ENCODE measurements at regions of chr17 and their contacts with region 1.

Region 1: DNA sequence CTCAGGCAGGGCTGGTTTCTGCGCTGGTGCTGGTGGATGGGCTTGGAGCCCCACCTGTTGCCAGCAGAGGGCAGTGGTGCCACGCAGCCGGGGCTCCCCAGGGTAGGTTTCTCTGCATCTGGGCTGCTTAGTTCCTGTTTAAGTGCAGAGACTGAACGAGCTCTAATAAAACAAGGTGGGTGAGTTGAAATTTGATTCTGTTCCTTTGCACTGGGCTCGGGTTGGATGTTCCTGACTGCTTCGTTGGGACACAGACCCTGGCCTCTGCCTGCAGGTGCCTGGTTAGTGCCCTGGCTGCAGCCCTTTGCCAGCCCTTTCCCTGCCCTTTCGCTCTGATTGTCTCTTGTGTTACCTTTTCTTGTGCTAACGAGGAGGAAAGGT is 30.0 kb downstream of the TBCD start:
- DNase-seq: peak; percentile 79 to 92 (median 85)
- ATAC-seq: peak; percentile 90 to 95 (median 95)
- H3K4me3 ChIP-seq: peak overlapping the region in 7 of 12 donors; percentile 14 to 33 (median 22)
- H3K27ac ChIP-seq: peak overlapping the region in 11 of 12 donors; percentile 21 to 85 (median 60)
- H3K4me1 ChIP-seq: peaks cover 0 to 10% (median 5%) of the 10 kb centered on the region in 12 donors
- H3K27me3 ChIP-seq: no peaks in the 10 kb centered on the region
- CTCF ChIP-seq: peak; percentile 95 to 99 (median 97)
- POLR2A ChIP-seq: no peak

Region 2: DNA sequence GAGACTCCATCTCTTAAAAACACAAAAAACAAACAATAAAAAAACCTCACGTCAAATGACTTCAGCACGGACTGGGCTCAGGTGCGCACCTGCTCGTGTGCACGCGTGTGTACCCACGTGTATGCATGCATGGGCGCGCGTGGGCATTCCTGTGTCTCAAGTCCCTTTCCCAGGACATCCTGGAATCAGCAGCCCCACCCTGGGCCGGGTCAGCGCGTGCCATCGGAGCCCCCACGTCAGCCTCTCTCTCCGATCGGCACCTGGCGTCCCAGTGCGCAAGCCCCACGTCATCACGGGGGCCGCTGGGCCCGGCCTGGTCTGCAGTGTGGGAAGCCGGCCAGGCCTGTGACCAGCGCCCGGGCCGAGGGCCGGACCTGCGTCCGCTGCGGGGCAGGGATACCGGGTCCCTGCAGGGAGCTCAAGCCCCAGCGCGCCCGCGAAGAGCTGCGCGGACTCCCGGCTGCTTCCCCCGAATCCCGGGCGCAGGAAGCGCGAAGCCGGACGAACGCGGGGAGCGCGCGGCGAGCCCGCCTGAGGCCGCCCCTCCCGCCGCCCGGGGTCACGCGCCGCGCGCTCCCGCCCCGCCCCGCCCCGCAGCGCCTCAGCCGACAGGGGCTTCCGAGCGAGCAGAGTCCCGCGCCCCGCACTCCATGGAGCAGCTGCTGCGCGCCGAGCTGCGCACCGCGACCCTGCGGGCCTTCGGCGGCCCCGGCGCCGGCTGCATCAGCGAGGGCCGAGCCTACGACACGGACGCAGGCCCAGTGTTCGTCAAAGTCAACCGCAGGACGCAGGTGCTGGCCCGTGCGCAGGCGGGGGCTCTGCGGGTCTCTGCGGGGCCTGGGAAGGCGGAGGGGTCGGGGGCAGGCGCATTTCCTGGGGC is 46.7 kb before region 1 on chr17 and contains the start of gene FN3K:
- intact Hi-C with region 1: no loop called
- DNase-seq: peak; percentile 75 to 81 (median 80)
- ATAC-seq: peak in 3 of 4 donors; percentile 46 to 64 (median 58)
- H3K4me3 ChIP-seq: peak within 1 kb of the TSS; percentile 43 to 95 (median 81)
- H3K27ac ChIP-seq: peak within 1 kb of the TSS; percentile 80 to 98 (median 94)
- H3K4me1 ChIP-seq: peaks cover 0 to 31% (median 9%) of the 10 kb centered on the region in 12 donors
- H3K27me3 ChIP-seq: no peaks in the 10 kb centered on the region
- CTCF ChIP-seq: no peak
- POLR2A ChIP-seq: peak in 1 of 2 donors; percentile 55
- total RNA-seq, gene FN3K: 15.5 to 121 (median 69.4) TPM

Region 3: DNA sequence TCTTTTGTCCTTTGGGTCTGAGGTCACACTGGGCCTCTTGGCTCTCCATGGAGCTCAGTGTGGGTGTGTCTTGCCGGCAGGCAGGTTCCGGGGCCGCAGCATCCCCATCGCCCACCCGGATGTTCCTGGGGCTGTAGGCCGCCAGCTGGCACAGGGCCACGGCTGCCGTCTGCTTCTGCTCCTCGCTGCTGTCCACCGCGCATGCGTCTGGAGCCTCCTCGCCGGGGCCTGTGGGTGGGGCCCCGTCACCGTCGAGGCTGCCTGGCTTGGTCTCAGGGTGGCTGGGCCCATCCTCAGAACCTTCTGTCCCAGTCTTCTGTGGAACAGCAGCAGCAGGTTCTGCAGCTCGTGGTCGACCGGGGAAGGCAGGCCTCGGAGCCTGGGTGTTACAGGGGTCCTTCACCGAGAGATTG is 48.4 kb after region 1 on chr17:
- intact Hi-C with region 1: loop called in 1 of 10 experiments (anchors 5 kb)
- DNase-seq: peak; percentile 86 to 94 (median 93)
- ATAC-seq: peak; percentile 79 to 91 (median 86)
- H3K4me3 ChIP-seq: peak overlapping the region in 11 of 12 donors; percentile 20 to 62 (median 41)
- H3K27ac ChIP-seq: peak overlapping the region; percentile 47 to 85 (median 72)
- H3K4me1 ChIP-seq: peaks cover 0 to 22% (median 6%) of the 10 kb centered on the region in 12 donors
- H3K27me3 ChIP-seq: no peaks in the 10 kb centered on the region
- CTCF ChIP-seq: no peak
- POLR2A ChIP-seq: peak in 1 of 2 donors; percentile 30

Region 4: GRCh38 chr17:82839617-82840280 is 57.9 kb after region 1 on chr17 and contains the start of gene ZNF750:
- intact Hi-C with region 1: loop called in 3 of 10 experiments (anchors 2 to 5 kb)
- DNase-seq: no peak
- ATAC-seq: no peak
- H3K4me3 ChIP-seq: no peak within 1 kb of the TSS
- H3K27ac ChIP-seq: peak within 1 kb of the TSS in 6 of 12 donors; percentile 25 to 76 (median 67)
- H3K4me1 ChIP-seq: peaks cover 4 to 42% (median 18%) of the 10 kb centered on the region in 12 donors
- H3K27me3 ChIP-seq: no peaks in the 10 kb centered on the region
- CTCF ChIP-seq: no peak
- POLR2A ChIP-seq: no peak
- total RNA-seq, gene ZNF750: 0.31 to 0.38 TPM in 2 of 9 donors, not detected in the others

Region 5: DNA sequence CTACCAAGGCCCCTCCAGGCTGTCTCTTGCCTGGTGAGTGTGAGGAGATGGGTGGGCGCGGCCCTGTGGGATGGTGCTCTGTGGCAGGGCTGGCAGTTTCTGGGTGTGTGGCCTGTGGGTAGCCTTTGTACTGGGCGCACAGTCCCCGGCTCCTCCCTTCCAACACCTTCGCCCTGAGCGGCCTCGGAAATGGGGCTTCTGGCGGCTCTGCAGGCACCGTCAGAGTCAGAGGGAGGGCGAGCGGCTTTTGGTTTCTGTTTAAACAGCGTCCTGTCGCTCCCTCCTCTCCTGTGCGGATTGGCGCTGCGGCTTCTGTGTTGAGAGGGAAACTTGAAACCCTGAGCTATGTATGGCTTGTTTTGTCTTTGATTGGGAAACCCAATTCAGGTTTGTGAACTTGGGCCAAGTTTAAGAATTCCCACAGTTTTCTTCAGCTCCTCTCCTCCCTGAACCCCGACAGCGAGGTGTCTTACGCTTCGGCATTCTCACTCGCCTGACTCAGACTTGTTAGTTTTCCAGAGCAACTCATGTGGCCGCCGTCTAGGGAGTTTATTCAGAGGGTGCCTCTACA is 66.2 kb after region 1 on chr17:
- intact Hi-C with region 1: loop called in 5 of 10 experiments (anchors 1 to 5 kb)
- DNase-seq: peak in 1 of 5 donors; percentile 61
- ATAC-seq: peak in 3 of 4 donors; percentile 14 to 17 (median 15)
- H3K4me3 ChIP-seq: peak overlapping the region in 9 of 12 donors; percentile 2 to 50 (median 31)
- H3K27ac ChIP-seq: peak overlapping the region in 11 of 12 donors; percentile 6 to 94 (median 79)
- H3K4me1 ChIP-seq: peaks cover 0 to 20% (median 9%) of the 10 kb centered on the region in 12 donors
- H3K27me3 ChIP-seq: no peaks in the 10 kb centered on the region
- CTCF ChIP-seq: no peak
- POLR2A ChIP-seq: no peak

Region 6: DNA sequence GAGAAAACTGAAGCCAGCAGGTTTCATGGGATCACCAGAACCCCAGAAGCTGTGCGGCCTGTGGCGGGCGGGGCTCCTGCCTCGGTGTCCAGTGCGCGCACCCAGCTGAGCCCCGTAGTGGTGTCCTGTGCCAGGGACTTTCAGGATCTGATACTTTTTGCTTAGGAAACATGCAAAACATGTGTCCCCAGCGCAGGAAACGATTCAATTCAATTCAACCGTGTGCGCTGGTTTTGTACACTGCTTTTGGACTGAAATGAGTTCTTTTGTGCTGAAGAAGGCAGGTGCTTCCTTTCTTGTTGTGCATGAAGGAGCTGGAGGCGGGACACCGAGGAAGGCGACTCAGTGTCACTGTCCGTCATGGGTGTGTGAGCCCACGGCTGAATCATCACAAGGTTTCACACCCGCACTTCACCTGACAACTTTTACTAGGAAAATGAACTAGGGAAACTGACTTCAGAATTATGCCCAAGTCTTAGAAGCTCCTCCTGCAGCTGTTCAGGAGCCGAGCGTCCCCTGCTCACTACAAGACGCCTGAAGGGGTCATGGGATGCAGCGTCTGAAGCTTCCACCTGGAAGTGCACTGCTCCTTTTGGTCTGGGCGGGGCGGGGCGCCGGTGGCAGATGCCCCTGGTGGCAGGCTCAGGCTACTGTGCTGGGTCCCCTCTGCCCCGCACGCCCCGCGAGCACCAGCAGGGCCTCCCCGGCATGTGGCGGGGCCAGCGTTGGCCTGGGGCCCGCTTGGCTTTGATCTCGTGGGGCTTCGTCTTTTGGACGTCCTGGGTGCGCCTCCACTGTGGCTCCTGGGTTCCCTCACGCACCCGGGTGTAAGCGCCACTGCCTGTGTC is 89.4 kb after region 1 on chr17:
- intact Hi-C with region 1: loop called in 1 of 10 experiments (anchors 2 kb)
- DNase-seq: peak in 4 of 5 donors; percentile 45 to 63 (median 49)
- ATAC-seq: peak; percentile 22 to 79 (median 33)
- H3K4me3 ChIP-seq: peak overlapping the region in 1 of 12 donors; percentile 4
- H3K27ac ChIP-seq: peak overlapping the region; percentile 43 to 86 (median 70)
- H3K4me1 ChIP-seq: peaks cover 0 to 54% (median 31%) of the 10 kb centered on the region in 12 donors
- H3K27me3 ChIP-seq: no peaks in the 10 kb centered on the region
- CTCF ChIP-seq: no peak
- POLR2A ChIP-seq: no peak

Region 7: DNA sequence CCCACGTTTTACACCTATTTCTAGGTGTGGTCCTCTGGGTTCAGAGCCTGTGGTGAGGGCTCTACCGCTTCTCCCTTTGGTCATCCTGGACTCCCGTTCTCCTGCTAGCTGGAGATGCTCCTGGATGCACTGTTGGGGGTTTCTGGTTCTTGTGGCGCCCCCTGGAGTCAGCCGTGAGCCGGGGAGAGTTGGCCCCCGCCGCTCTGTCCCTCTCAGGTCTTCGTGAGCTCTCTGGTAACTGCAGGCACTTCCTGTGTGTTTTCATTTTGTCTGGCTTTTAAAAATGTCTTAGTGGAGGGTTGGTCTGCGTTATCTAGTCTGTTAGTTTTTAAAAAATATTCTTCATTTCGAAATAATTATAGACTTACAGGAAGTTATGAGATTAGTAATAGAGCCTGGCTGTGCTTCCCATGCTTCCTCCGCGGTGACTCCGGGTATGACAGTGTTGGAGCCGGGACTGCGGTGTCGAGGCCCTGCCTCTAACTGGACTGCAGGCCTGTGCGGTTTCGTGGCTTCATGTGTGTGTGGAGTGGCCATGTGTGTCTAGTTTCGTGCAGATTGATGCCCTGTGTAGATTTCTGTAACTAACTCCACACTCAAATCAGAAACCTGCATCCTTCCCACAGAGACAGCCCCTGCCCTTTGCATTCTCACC is 135.9 kb after region 1 on chr17:
- intact Hi-C with region 1: loop called (anchors 1 to 5 kb)
- DNase-seq: peak in 1 of 5 donors; percentile 26
- ATAC-seq: peak in 1 of 4 donors; percentile 31
- H3K4me3 ChIP-seq: no peak overlapping the region
- H3K27ac ChIP-seq: no peak overlapping the region
- H3K4me1 ChIP-seq: peaks cover 0 to 15% (median 4%) of the 10 kb centered on the region in 12 donors
- H3K27me3 ChIP-seq: no peaks in the 10 kb centered on the region
- CTCF ChIP-seq: peak in 10 of 12 donors; percentile 11 to 57 (median 46)
- POLR2A ChIP-seq: no peak

Region 8: GRCh38 chr17:82962864-82963684 is 181.2 kb after region 1 on chr17:
- intact Hi-C with region 1: loop called in 3 of 10 experiments (anchors 2 to 5 kb)
- DNase-seq: peak; percentile 84 to 91 (median 88)
- ATAC-seq: peak; percentile 90 to 96 (median 93)
- H3K4me3 ChIP-seq: peak overlapping the region in 8 of 12 donors; percentile 1 to 44 (median 22)
- H3K27ac ChIP-seq: peak overlapping the region in 9 of 12 donors; percentile 30 to 79 (median 55)
- H3K4me1 ChIP-seq: peaks cover 2 to 13% (median 9%) of the 10 kb centered on the region in 12 donors
- H3K27me3 ChIP-seq: no peaks in the 10 kb centered on the region
- CTCF ChIP-seq: peak; percentile 58 to 89 (median 80)
- POLR2A ChIP-seq: no peak

Measured in heart left ventricle (tissue), 16 donors.